ENCODE measurements at regions of chr2 and their contacts with region 1.

Region 1: GRCh38 chr2:208175069-208175839 is 11.9 kb upstream of the CRYGA start:
- DNase-seq: peak; percentile 56 to 66
- H3K4me3 ChIP-seq: no peak overlapping the region
- H3K27ac ChIP-seq: no peak overlapping the region
- H3K4me1 ChIP-seq: peaks cover 17% of the 10 kb centered on the region
- H3K27me3 ChIP-seq: no peaks in the 10 kb centered on the region
- CTCF ChIP-seq: peak; percentile 72

Region 2: GRCh38 chr2:208101716-208102631 is 73.3 kb before region 1 on chr2:
- CTCF ChIA-PET with region 1: interaction called, 8 read pairs
- POLR2A ChIA-PET with region 1: no interaction called
- intact Hi-C with region 1: loop called (anchors 2 kb)
- DNase-seq: peak in 1 of 2 experiments; percentile 38
- H3K4me3 ChIP-seq: no peak overlapping the region
- H3K27ac ChIP-seq: no peak overlapping the region
- H3K4me1 ChIP-seq: no peaks in the 10 kb centered on the region
- H3K27me3 ChIP-seq: no peaks in the 10 kb centered on the region
- CTCF ChIP-seq: peak; percentile 65

Region 3: GRCh38 chr2:208142240-208142924 is 32.9 kb before region 1 on chr2:
- CTCF ChIA-PET with region 1: no interaction called
- POLR2A ChIA-PET with region 1: no interaction called
- intact Hi-C with region 1: no loop called
- DNase-seq: no peak
- H3K4me3 ChIP-seq: no peak overlapping the region
- H3K27ac ChIP-seq: no peak overlapping the region
- H3K4me1 ChIP-seq: no peaks in the 10 kb centered on the region
- H3K27me3 ChIP-seq: no peaks in the 10 kb centered on the region
- CTCF ChIP-seq: no peak

Measured in PC-9 (cell line).